ENCODE measurements at regions of chr1 and their contacts with region 1.

Region 1: GRCh38 chr1:181166377-181167196 is 78.1 kb downstream of the IER5 start:
- DNase-seq: peak; percentile 55 to 83 (median 60)
- ATAC-seq: peak; percentile 94 to 97
- H3K4me3 ChIP-seq: no peak overlapping the region
- H3K27ac ChIP-seq: no peak overlapping the region
- H3K4me1 ChIP-seq: no peaks in the 10 kb centered on the region
- H3K27me3 ChIP-seq: no peaks in the 10 kb centered on the region

Region 2: DNA sequence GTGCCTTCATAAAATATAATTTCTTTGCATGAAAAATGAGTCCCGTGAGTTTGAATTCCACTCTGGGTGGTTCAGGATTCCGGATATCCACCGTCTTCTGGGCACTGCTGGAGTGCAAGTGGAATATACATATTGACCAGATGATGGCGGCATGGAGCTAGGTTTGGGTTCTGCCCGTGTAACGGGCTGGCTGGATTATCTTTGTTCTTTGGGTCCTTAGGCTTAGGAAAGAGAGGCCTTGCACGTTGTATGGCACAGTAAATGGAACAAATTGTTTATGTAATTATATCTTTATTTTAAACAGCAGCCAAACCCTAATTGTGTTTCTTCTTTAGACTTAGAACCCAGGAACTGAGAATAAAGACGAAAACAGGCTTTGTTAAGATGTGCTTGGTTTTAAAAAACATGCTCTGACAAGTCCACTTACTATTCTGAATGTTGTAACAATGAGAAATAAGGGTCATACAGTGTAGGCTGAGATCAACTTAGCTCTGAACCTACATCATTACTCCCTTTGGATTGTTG is 650.7 kb before region 1 on chr1:
- intact Hi-C with region 1: loop called in 1 of 4 experiments (anchors 5 kb)
- DNase-seq: peak in 2 of 3 donors; percentile 51 to 57
- ATAC-seq: peak; percentile 96 to 97
- H3K4me3 ChIP-seq: no peak overlapping the region
- H3K27ac ChIP-seq: no peak overlapping the region
- H3K4me1 ChIP-seq: peaks cover 3% of the 10 kb centered on the region
- H3K27me3 ChIP-seq: no peaks in the 10 kb centered on the region

Region 3: GRCh38 chr1:180881806-180882509 is 284.6 kb before region 1 on chr1:
- intact Hi-C with region 1: loop called in 2 of 4 experiments (anchors 5 kb)
- DNase-seq: no peak
- ATAC-seq: peak; percentile 69 to 74
- H3K4me3 ChIP-seq: no peak overlapping the region
- H3K27ac ChIP-seq: no peak overlapping the region
- H3K4me1 ChIP-seq: no peaks in the 10 kb centered on the region
- H3K27me3 ChIP-seq: no peaks in the 10 kb centered on the region

Region 4: GRCh38 chr1:181021811-181022434 is 144.7 kb before region 1 on chr1:
- intact Hi-C with region 1: loop called in 1 of 4 experiments (anchors 5 kb)
- DNase-seq: peak; percentile 60 to 83 (median 83)
- ATAC-seq: peak; percentile 67 to 83
- H3K4me3 ChIP-seq: peak overlapping the region; percentile 76
- H3K27ac ChIP-seq: peak overlapping the region; percentile 85
- H3K4me1 ChIP-seq: no peaks in the 10 kb centered on the region
- H3K27me3 ChIP-seq: no peaks in the 10 kb centered on the region

Region 5: DNA sequence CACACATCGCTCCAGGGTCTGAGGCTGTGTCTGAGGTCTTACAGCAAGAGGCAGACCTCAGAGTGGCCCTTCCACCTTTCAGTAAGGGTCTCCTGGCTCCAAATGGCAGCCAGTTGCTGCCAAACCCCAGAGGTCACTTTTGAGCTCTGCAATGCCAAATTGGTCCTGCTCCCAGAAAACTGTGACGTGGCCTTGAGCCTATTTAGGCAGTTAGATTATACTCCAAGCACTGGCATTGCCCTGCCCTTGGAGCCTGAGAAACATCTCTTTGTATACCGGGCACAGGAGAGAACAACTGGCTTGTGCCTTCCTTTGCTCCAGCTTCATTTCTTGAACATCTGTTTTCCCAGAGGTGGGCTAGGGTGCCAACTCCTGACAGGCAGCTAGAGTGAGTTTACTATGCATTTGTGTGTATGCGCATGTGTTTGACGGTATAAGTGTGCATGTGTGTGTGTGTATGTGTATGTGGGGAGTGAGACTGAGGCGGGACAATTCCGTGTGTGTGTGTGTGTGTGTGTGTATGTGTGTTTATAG is 56.5 kb after region 1 on chr1:
- intact Hi-C with region 1: no loop called
- DNase-seq: no peak
- ATAC-seq: peak; percentile 33 to 44
- H3K4me3 ChIP-seq: no peak overlapping the region
- H3K27ac ChIP-seq: peak overlapping the region; percentile 61
- H3K4me1 ChIP-seq: no peaks in the 10 kb centered on the region
- H3K27me3 ChIP-seq: no peaks in the 10 kb centered on the region

Region 6: GRCh38 chr1:181314959-181315358 is 148.4 kb after region 1 on chr1:
- intact Hi-C with region 1: no loop called
- DNase-seq: no peak
- ATAC-seq: no peak
- H3K4me3 ChIP-seq: no peak overlapping the region
- H3K27ac ChIP-seq: no peak overlapping the region
- H3K4me1 ChIP-seq: no peaks in the 10 kb centered on the region
- H3K27me3 ChIP-seq: peaks cover 2% of the 10 kb centered on the region

Measured in right cardiac atrium (tissue), 5 donors.